ENCODE measurements at regions of chr17 and their contacts with region 1.

Region 1: DNA sequence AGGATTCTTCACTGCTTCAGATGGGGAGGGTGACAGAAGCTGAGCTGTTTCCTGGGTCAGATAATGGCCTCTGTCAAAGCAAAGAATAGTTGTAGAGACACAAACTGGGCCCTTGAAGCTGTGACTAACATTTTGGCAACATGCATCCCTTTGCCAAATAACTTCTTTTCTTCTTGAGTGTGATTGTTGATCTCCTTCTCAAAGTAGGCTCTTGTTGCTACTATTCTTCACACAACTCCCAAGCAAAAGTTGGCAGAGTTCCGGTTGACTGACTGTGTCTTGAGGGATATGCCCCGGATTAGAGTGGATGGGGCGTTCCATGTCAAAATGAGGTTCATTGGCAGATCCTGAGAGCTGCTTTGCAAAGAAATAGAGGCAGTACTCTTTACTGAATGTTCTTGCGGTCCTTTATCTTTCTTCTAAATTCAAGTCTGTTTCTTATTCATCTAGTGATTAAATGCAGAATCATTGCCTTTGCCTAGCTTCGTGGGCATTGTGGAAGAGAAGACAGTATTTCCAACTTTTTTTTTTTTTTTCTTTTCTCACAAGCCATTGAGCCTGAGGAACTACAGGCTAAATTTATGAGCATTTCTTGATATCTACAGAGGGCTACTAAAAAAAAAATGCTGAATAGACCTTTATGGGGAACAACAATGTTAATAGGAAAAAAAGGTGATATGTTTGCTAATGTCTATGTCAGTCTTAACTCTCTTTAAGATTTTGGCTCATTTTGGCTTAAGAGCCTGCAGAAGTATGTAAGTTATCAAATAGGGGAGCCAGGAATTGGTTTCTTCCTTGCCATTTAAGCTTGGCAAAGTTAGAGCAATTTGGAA is 5.8 kb downstream of the WIPF2 start:
- DNase-seq: no peak
- ATAC-seq: peak; percentile 72

Region 2: DNA sequence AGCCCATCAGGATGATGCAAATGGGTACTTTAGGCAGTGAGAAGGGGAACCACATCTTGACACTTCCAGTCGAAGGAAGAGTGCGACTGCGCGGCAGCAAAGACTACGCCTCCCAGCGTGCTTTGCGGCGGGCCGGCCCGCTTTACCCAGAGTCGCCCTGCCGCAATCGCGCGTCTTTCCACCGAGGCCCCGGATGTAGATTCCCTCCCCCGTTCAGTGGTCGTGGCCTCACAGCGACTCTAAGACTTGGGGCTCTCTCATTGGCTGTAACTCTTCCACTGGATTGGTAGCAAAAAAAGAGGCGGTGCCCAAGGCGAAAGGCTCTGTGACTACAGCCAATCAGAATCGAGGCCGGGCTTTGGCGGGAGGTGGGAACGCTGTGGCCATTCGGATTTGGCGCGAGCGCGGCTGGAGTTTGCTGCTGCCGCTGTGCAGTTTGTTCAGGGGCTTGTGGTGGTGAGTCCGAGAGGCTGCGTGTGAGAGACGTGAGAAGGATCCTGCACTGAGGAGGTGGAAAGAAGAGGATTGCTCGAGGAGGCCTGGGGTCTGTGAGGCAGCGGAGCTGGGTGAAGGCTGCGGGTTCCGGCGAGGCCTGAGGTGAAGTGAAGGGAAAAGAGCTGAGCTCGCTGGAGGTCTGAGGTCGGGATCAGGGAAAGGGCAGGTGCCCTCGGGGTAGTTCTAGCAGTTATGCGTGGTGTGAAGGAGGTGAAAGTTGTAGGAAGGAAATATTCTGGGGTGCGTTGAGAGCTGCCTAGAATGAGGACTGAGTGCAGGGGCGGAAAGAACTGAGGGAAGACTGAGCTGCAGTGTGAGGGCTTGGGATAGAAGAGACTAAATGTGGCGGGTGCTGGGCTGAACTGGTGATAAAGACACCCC is 62.8 kb after region 1 on chr17 and contains the start of gene CDC6:
- intact Hi-C with region 1: loop called (anchors 10 kb)
- DNase-seq: peak; percentile 98
- ATAC-seq: peak; percentile 98
- total RNA-seq, gene CDC6: 0.99 TPM

Region 3: DNA sequence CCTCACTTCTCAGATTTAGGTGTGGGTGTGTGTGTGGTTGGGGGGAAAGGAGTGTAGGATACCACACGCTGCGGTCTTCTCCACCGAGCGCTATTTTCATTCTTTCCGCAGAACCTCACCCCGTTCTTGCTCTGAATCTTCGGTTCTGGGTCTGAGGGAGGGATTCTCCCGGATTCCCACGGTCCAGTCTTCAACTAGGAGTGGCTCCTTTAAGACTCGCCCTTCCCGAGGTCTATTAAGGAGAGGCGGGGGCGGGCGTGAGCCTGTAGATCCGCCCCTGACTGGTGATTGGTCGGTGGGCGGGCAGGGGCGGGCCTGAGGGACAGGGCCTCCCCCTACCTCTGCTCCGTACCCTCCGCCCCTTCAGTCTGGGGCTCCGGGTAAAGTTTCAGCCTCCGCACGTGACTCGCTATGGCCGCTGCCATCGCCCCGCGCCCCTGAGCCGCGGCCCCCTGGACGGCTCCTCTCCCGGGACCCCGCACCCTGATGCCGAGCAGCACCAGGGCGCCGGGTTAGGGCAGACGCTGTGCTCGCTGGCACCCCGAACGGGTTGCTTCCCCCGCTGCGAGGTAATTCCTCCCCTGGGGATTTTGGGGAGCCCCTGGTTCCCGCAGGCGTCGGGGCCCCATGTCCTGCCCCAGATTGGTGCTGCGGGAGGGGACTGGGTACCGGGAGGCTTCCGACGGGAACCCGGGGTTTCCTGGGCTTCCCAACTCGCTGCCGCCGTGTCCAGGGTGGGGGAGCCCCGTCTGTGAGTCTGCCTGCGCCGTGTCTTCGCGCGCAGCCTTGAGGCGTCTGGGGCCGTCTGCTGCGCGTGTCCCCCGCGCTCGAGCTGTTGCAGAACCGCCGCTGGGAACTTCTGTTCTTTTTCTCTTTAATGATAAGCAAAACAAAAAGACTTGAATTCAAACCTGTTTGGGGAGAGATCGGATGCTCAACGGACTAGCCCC is 93.2 kb after region 1 on chr17:
- intact Hi-C with region 1: no loop called
- DNase-seq: peak; percentile 97
- ATAC-seq: peak; percentile 85

Measured in left ventricle myocardium superior (tissue), 1 donor.